K562 (cell line): ENCODE measurements at regions of chr2 and their contacts with region 1.

Region 1: GRCh38 chr2:208783187-208783586 is 376.6 kb downstream of the PTH2R start:
- DNase-seq: peak in 1 of 4 experiments; percentile 5
- ATAC-seq: no peak; the same call in 2 of the 3 replicates
- H3K4me3 ChIP-seq: no peak overlapping the region
- H3K27ac ChIP-seq: no peak overlapping the region
- H3K4me1 ChIP-seq: no peaks in the 10 kb centered on the region
- H3K27me3 ChIP-seq: no peaks in the 10 kb centered on the region
- CTCF ChIP-seq: 0 out of 6 replicates have a peak, but pooled peaks of 1 of the 3 experiments have one; percentile 12
- EP300 ChIP-seq: no peak
- POLR2A ChIP-seq: no peak
- RAD21 ChIP-seq: no peak

Region 2: GRCh38 chr2:208489687-208490086 is 293.5 kb before region 1 on chr2:
- CTCF ChIA-PET with region 1: no interaction called
- POLR2A ChIA-PET with region 1: no interaction called
- in situ Hi-C with region 1: no loop called
- intact Hi-C with region 1: loop called (anchors 5 kb)
- DNase-seq: peak; percentile 9 to 38 (median 10)
- ATAC-seq: peak; percentile 75
- H3K4me3 ChIP-seq: no peak overlapping the region
- H3K27ac ChIP-seq: peak overlapping the region; percentile 72
- H3K4me1 ChIP-seq: peaks cover 11 to 30% of the 10 kb centered on the region in 2 experiments; a peak in 3 of 5 replicates
- H3K27me3 ChIP-seq: no peaks in the 10 kb centered on the region
- CTCF ChIP-seq: peak in 1 of 3 experiments; percentile 8; a peak in 1 of 6 replicates
- EP300 ChIP-seq: no peak
- POLR2A ChIP-seq: no peak
- RAD21 ChIP-seq: peak in 1 of 2 experiments; percentile 44; a peak in 2 of 4 replicates